Panc1 (cell line): ENCODE measurements at regions of chrX and their contacts with region 1.

Region 1: GRCh38 chrX:155026726-155027508 is at the start of gene FUNDC2:
- DNase-seq: peak; percentile 85
- ATAC-seq: peak; percentile 95
- H3K4me3 ChIP-seq: peak within 1 kb of the TSS; percentile 72 to 89
- H3K27ac ChIP-seq: peak within 1 kb of the TSS; percentile 100
- H3K4me1 ChIP-seq: peaks cover 17% of the 10 kb centered on the region
- H3K27me3 ChIP-seq: no peaks in the 10 kb centered on the region
- CTCF ChIP-seq: no peak
- total RNA-seq, gene FUNDC2: 68.8 TPM

Region 2: GRCh38 chrX:154799554-154800348 is 227.2 kb before region 1 on chrX:
- CTCF ChIA-PET with region 1: no interaction called
- POLR2A ChIA-PET with region 1: interaction called, 13 read pairs
- in situ Hi-C with region 1: no loop called
- intact Hi-C with region 1: no loop called
- DNase-seq: no peak
- ATAC-seq: peak; percentile 87
- H3K4me3 ChIP-seq: peak overlapping the region in 1 of 2 experiments; percentile 19; a peak in 2 of 4 replicates
- H3K27ac ChIP-seq: peak overlapping the region; percentile 83
- H3K4me1 ChIP-seq: peaks cover 88% of the 10 kb centered on the region
- H3K27me3 ChIP-seq: no peaks in the 10 kb centered on the region
- CTCF ChIP-seq: no peak

Region 3: DNA sequence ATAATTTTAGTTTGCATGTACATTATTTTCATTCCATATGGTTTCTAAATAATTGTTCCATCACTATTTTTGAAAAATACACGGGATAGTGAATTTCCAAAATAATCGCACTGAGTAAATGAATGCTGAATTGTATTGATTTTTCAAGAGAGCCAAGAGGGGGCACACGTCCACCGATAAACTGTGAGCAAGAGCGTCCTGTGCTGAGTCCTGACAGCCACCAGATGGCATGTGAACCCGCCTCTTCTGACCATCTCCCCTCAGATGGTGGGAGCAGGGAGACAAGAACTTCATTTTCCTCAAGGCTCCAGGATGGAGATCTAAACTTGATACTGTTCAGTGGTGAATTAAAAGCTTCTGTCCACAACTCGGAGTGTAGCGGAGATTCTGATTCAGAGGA is 939.9 kb after region 1 on chrX:
- CTCF ChIA-PET with region 1: no interaction called
- POLR2A ChIA-PET with region 1: no interaction called
- in situ Hi-C with region 1: no loop called
- intact Hi-C with region 1: no loop called
- DNase-seq: no peak
- ATAC-seq: peak; percentile 94
- H3K4me3 ChIP-seq: no peak overlapping the region
- H3K27ac ChIP-seq: no peak overlapping the region
- H3K4me1 ChIP-seq: no peaks in the 10 kb centered on the region
- H3K27me3 ChIP-seq: no peaks in the 10 kb centered on the region
- CTCF ChIP-seq: peak; percentile 80